ENCODE measurements at regions of chrX and their contacts with region 1.

Region 1: DNA sequence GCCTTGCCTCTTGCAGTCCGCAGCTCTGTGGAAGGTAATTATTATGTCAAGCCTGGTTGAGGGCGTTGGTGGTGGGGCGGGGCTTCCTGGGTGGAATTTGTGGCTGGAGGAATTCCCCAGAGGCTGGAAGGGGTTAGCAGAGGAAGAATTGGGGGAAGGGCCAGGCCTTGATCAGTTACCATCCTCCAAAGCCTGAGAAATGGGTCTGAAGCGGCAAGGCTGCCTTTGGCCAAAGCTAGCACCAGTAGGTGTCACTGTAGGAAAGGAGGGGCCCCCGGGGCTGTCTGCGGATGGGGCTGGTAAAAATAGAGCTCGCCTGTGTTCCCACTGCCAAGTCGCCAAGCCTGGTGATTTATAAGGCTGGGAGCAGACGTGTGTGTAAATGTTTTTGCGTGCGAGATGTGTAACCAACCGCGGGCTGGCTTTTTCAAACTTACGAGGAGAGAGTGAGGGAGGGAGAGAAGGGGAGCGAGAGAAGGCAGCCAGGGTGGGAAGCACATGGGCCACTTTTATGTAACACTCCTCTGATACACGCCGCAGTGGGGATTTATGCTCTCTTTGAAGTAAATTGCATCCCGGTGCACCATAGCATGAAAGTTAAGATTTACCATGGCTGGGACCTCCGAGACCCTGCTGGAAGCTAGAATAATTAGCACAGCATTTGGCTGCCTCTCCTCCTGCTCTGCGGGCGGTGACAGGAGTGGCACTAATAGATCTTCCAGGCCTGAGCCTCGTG is 366.9 kb downstream of the BCOR start:
- DNase-seq: peak; percentile 15 to 59 (median 47)
- ATAC-seq: peak; percentile 80
- H3K4me3 ChIP-seq: no peak overlapping the region
- H3K4me3 Mint-ChIP-seq: peak overlapping the region in 8 of 10 donors; percentile 30 to 76 (median 50)
- H3K27ac ChIP-seq: no peak overlapping the region
- H3K27ac Mint-ChIP-seq: peak overlapping the region in 6 of 9 donors; percentile 53 to 90 (median 76)
- H3K4me1 ChIP-seq: no peaks in the 10 kb centered on the region
- H3K4me1 Mint-ChIP-seq: peaks cover 0 to 15% (median 4%) of the 10 kb centered on the region in 7 donors
- H3K27me3 ChIP-seq: no peaks in the 10 kb centered on the region
- H3K27me3 Mint-ChIP-seq: no peaks in the 10 kb centered on the region

Region 2: GRCh38 chrX:39261446-39262147 is 469.2 kb before region 1 on chrX:
- CTCF ChIA-PET with region 1: no interaction called
- POLR2A ChIA-PET with region 1: no interaction called
- intact Hi-C with region 1: loop called in 1 of 2 experiments (anchors 2 kb)
- DNase-seq: peak in 7 of 9 donors; percentile 8 to 49 (median 31)
- ATAC-seq: peak; percentile 47
- H3K4me3 ChIP-seq: no peak overlapping the region
- H3K4me3 Mint-ChIP-seq: no peak overlapping the region
- H3K27ac ChIP-seq: no peak overlapping the region
- H3K27ac Mint-ChIP-seq: peak overlapping the region in 2 of 9 donors; percentile 14 to 17
- H3K4me1 ChIP-seq: no peaks in the 10 kb centered on the region
- H3K4me1 Mint-ChIP-seq: peaks cover 0 to 28% (median 10%) of the 10 kb centered on the region in 7 donors
- H3K27me3 ChIP-seq: no peaks in the 10 kb centered on the region
- H3K27me3 Mint-ChIP-seq: no peaks in the 10 kb centered on the region

Region 3: DNA sequence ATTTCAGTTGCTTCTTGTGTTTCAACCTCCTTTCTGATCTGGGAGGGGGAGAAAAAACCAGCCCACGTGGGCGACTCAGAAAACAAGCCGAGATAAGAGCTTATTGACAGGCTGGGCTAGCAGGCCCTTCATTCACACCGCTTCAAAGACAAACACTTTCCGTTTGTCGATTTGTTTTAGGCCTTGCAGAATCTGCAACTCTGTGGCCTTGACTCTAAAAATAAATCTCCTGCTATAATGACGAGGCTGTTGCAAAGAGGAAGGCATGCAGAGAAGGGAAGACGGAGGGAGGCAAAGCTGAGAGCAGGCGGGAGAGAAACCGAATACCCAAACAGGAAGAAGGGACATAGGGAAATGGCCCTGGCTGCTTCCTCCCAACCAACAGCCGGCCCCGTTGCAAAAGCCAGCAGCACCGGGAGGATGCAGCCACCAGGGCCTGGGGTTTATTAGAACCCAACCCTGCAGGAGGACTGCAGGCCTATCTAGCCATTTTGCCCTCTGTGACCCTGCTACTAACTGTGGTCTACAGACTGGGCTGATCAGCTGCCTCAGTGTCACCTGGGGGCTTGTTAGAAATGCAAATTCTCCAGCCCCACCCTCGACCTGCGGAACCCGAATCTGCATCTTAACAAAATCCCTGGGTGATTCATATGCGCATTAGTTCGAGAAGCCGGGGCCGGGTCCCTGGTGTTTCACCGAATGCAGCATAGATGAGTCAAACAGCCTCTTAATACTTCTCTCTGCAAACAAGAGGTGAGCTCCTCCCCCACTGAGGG is 41.4 kb after region 1 on chrX:
- CTCF ChIA-PET with region 1: no interaction called
- POLR2A ChIA-PET with region 1: no interaction called
- intact Hi-C with region 1: loop called (anchors 5 kb)
- DNase-seq: peak in 6 of 9 donors; percentile 18 to 52 (median 30)
- ATAC-seq: peak; percentile 63
- H3K4me3 ChIP-seq: peak overlapping the region; percentile 17
- H3K4me3 Mint-ChIP-seq: peak overlapping the region; percentile 43 to 80 (median 74)
- H3K27ac ChIP-seq: peak overlapping the region; percentile 43
- H3K27ac Mint-ChIP-seq: peak overlapping the region; percentile 86 to 98 (median 94)
- H3K4me1 ChIP-seq: peaks cover 26 to 32% of the 10 kb centered on the region in 2 donors
- H3K4me1 Mint-ChIP-seq: peaks cover 20 to 50% (median 43%) of the 10 kb centered on the region in 7 donors
- H3K27me3 ChIP-seq: no peaks in the 10 kb centered on the region
- H3K27me3 Mint-ChIP-seq: no peaks in the 10 kb centered on the region

Region 4: GRCh38 chrX:39886282-39886681 is 155.5 kb after region 1 on chrX:
- CTCF ChIA-PET with region 1: no interaction called
- POLR2A ChIA-PET with region 1: no interaction called
- intact Hi-C with region 1: no loop called
- DNase-seq: no peak
- ATAC-seq: no peak
- H3K4me3 ChIP-seq: no peak overlapping the region
- H3K4me3 Mint-ChIP-seq: peak overlapping the region in 1 of 10 donors; percentile 7
- H3K27ac ChIP-seq: no peak overlapping the region
- H3K27ac Mint-ChIP-seq: no peak overlapping the region
- H3K4me1 ChIP-seq: peaks cover 0 to 1% of the 10 kb centered on the region in 2 donors
- H3K4me1 Mint-ChIP-seq: peaks cover 3 to 30% (median 6%) of the 10 kb centered on the region in 7 donors
- H3K27me3 ChIP-seq: no peaks in the 10 kb centered on the region
- H3K27me3 Mint-ChIP-seq: peaks cover 0 to 10% (median 0%) of the 10 kb centered on the region in 5 donors

Region 5: DNA sequence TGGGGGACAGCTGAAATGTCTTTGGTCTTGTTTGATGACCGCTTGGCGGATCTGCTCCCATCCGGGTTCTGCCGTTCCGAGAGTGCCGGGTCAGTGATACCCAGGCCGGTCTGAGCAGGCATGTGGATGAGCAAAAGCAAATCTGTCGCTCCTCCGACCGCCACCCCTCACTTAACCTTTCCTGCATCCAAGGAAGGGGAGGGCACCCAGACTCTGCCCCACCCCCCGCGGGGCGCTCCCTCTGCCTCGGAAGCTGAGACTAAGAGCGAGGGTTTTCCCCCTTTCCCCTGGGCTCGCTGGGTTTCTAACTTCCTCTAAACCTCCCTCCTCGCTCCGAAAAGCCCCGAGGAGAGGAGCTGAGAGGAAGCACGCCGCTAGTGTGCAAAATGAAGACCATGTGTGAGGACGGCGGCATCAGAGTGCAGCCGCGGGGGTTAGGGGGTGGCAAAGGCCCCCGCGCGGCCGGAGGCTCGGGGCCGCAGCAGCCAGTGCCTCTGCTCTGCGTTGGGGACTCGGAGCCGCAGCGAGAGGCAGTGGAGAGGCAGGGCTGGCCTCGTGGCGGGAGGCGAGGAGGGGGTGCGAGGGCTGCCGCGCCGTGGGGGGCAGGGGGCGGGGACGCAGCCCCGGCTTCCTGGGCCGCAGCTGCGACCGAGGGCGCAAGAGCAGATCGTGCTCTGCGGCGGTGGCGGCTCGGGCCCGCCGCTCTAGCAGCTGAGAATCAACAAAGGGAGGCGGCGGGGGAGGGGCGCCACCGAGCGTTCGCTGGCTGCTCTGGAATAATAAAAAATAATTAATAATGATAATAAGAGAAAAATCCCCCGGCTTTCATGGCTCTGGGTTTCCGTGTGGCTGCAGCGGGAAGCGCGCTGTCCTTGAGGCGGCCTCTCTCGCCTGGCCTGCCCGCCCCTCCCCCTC is 422.8 kb after region 1 on chrX:
- CTCF ChIA-PET with region 1: no interaction called
- POLR2A ChIA-PET with region 1: interaction called, 7 read pairs
- intact Hi-C with region 1: loop called in 1 of 2 experiments (anchors 5 kb)
- DNase-seq: peak in 4 of 9 donors; percentile 32 to 75 (median 56)
- ATAC-seq: peak; percentile 70
- H3K4me3 ChIP-seq: peak overlapping the region; percentile 50
- H3K4me3 Mint-ChIP-seq: peak overlapping the region; percentile 81 to 88 (median 84)
- H3K27ac ChIP-seq: peak overlapping the region; percentile 27
- H3K27ac Mint-ChIP-seq: peak overlapping the region in 7 of 9 donors; percentile 39 to 84 (median 70)
- H3K4me1 ChIP-seq: peaks cover 0 to 4% of the 10 kb centered on the region in 2 donors
- H3K4me1 Mint-ChIP-seq: peaks cover 0 to 22% (median 14%) of the 10 kb centered on the region in 7 donors
- H3K27me3 ChIP-seq: no peaks in the 10 kb centered on the region
- H3K27me3 Mint-ChIP-seq: peaks cover 0 to 8% (median 0%) of the 10 kb centered on the region in 5 donors

Region 6: GRCh38 chrX:40244980-40245379 is 514.1 kb after region 1 on chrX:
- CTCF ChIA-PET with region 1: no interaction called
- POLR2A ChIA-PET with region 1: no interaction called
- intact Hi-C with region 1: loop called in 1 of 2 experiments (anchors 5 kb)
- DNase-seq: peak in 6 of 9 donors; percentile 9 to 37 (median 19)
- ATAC-seq: peak; percentile 45
- H3K4me3 ChIP-seq: no peak overlapping the region
- H3K4me3 Mint-ChIP-seq: peak overlapping the region; percentile 3 to 75 (median 26)
- H3K27ac ChIP-seq: no peak overlapping the region
- H3K27ac Mint-ChIP-seq: peak overlapping the region in 1 of 9 donors; percentile 21
- H3K4me1 ChIP-seq: peaks cover 0 to 13% of the 10 kb centered on the region in 2 donors
- H3K4me1 Mint-ChIP-seq: peaks cover 6 to 14% (median 13%) of the 10 kb centered on the region in 7 donors
- H3K27me3 ChIP-seq: no peaks in the 10 kb centered on the region
- H3K27me3 Mint-ChIP-seq: peaks cover 0 to 6% (median 2%) of the 10 kb centered on the region in 5 donors

Region 7: GRCh38 chrX:40468033-40468846 is 737.4 kb after region 1 on chrX:
- CTCF ChIA-PET with region 1: interaction called, 4 read pairs
- POLR2A ChIA-PET with region 1: interaction called, 3 read pairs
- intact Hi-C with region 1: loop called in 1 of 2 experiments (anchors 1 kb)
- DNase-seq: peak in 5 of 9 donors; percentile 22 to 40 (median 31)
- ATAC-seq: peak; percentile 72
- H3K4me3 ChIP-seq: no peak overlapping the region
- H3K4me3 Mint-ChIP-seq: peak overlapping the region in 6 of 10 donors; percentile 8 to 73 (median 38)
- H3K27ac ChIP-seq: no peak overlapping the region
- H3K27ac Mint-ChIP-seq: peak overlapping the region in 2 of 9 donors; percentile 14 to 69
- H3K4me1 ChIP-seq: peaks cover 0 to 13% of the 10 kb centered on the region in 2 donors
- H3K4me1 Mint-ChIP-seq: peaks cover 14 to 40% (median 33%) of the 10 kb centered on the region in 7 donors
- H3K27me3 ChIP-seq: no peaks in the 10 kb centered on the region
- H3K27me3 Mint-ChIP-seq: no peaks in the 10 kb centered on the region